AG04449 (cell line): ENCODE measurements at regions of chr2 and their contacts with region 1.

Region 1: DNA sequence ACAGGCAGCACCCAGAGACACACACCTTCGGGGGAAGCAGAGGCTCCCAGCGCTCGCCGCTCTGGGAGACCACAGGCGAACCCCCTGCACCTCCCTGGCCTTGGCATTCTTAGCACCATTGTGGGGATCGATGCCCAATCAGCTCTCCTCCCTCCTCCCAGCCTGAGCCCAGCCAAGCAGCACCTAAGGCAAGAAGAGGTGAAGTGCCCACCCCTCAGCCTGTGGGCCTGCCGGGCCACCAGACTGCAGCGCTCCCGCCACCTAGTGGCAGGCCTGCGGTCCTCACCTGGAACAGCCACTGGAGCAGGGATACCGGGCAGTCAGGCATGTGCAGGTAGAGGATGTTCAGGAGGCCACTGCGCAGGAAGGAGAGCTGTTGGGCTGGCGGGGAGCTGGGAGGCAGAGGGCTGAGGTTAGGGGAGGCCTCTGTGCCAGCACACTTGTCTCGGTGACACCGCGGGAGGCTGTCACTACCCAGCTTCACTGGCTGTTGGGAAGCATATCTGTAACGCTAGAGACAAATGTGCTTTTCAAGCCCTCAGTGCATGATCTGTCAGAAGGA is 35.2 kb downstream of the FAM178B start:
- DNase-seq: no peak
- H3K4me3 ChIP-seq: no peak overlapping the region
- CTCF ChIP-seq: peak; percentile 93

Region 2: GRCh38 chr2:96940001-96940615 is 11.1 kb before region 1 on chr2:
- CTCF ChIA-PET with region 1: interaction called, 73 read pairs
- POLR2A ChIA-PET with region 1: no interaction called
- DNase-seq: no peak
- H3K4me3 ChIP-seq: no peak overlapping the region
- CTCF ChIP-seq: no peak

Region 3: GRCh38 chr2:96977631-96978195 is 26.5 kb after region 1 on chr2:
- CTCF ChIA-PET with region 1: no interaction called
- POLR2A ChIA-PET with region 1: no interaction called
- DNase-seq: no peak
- H3K4me3 ChIP-seq: no peak overlapping the region; the same call in 1 of the 2 replicates
- CTCF ChIP-seq: no peak